HCT116 (cell line): ENCODE measurements at regions of chr3 and their contacts with region 1.

Region 1: DNA sequence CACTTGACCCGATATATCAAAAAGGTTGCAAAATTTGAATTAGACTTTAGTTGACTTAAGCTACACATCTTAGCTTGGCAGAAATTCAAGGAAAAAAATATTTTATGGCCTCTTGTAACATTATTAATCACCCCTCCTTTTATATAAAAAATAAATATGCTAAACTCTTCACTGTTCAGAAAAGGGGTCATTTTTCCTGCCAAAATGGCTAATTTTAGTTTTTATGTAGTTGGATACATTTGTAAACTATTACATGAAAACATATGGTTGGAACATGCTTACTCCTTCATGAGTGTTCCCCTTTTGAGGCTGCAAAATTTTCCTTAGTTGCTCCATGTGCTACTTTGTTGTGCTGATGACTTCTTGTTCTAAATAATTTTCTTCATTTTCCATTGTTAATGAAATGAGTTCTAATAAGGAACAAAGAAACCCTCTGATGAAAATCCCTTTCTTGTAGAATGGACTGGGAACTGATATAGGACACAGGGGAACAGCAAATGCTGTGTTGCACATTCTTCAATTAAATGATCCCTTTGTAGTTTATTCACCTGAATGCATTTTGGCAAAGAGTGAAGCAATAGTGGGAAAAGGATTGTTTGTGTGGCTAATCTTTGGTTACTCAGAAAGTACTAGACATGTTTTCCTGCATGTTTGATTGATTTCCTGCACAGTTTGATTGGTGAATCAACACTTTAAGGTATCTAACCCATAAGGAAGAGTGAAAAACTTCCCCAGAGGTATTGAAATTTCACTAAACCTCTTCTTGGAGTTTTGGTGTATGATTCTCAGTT is 349.3 kb downstream of the TIGIT start:
- DNase-seq: peak; percentile 83
- ATAC-seq: peak; percentile 35
- H3K4me3 ChIP-seq: no peak overlapping the region
- H3K27ac ChIP-seq: peak overlapping the region; percentile 97
- H3K4me1 ChIP-seq: peaks cover 91 to 92% of the 10 kb centered on the region in 2 experiments
- H3K27me3 ChIP-seq: no peaks in the 10 kb centered on the region
- CTCF ChIP-seq: no peak
- POLR2A ChIP-seq: no peak
- RAD21 ChIP-seq: peak; percentile 33

Region 2: GRCh38 chr3:114498779-114499370 is 144.3 kb before region 1 on chr3:
- CTCF ChIA-PET with region 1: no interaction called
- POLR2A ChIA-PET with region 1: no interaction called
- RAD21 ChIA-PET with region 1: no interaction called
- intact Hi-C with region 1: loop called (anchors 2 kb)
- DNase-seq: peak; percentile 94
- ATAC-seq: peak; percentile 91
- H3K4me3 ChIP-seq: peak overlapping the region in 1 of 2 experiments; percentile 38; a peak in 2 of 4 replicates
- H3K27ac ChIP-seq: peak overlapping the region; percentile 77
- H3K4me1 ChIP-seq: peaks cover 84 to 90% of the 10 kb centered on the region in 2 experiments
- H3K27me3 ChIP-seq: no peaks in the 10 kb centered on the region
- CTCF ChIP-seq: no peak
- POLR2A ChIP-seq: no peak
- RAD21 ChIP-seq: no peak